BJ (cell line): ENCODE measurements at regions of chr7 and their contacts with region 1.

Region 1: DNA sequence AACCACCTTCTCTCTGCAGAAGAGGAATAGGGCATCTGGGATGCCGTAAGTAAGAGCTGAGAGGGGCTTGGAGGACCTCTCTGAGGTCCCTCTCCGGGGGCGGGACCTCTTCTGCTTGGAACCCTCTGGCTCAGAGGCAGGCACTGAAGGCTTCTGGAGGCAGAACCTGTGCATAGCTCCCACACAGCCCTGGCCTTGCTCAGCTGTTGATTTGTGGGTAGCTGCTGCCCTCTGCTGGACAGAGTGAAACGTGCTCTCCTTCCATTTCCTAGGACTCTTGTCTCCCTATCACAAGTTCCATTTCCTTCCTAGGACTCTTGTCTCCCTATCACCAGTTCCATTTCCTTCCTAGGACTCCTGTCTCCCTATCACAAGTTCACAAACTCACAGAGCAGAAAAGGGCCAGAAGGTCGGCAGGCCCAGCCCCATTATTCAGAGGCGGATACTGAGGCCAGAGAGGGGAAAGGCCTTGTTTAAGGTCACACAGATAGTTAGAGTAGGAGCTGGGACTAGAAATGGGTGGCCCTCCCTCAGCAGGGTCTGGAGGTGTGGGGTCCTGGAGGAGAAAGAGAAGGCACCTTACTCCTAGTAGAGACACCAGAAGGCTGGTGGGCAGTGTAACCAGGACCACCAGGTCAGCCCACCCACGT is 30.3 kb upstream of the GARS1 start:
- DNase-seq: no peak
- H3K4me3 ChIP-seq: no peak overlapping the region
- H3K27me3 ChIP-seq: no peaks in the 10 kb centered on the region
- CTCF ChIP-seq: peak; percentile 83

Region 2: GRCh38 chr7:30164567-30164966 is 399.8 kb before region 1 on chr7:
- CTCF ChIA-PET with region 1: interaction called, 12 read pairs
- POLR2A ChIA-PET with region 1: no interaction called
- DNase-seq: no peak
- H3K4me3 ChIP-seq: no peak overlapping the region
- H3K27me3 ChIP-seq: no peaks in the 10 kb centered on the region
- CTCF ChIP-seq: peak; percentile 61

Region 3: GRCh38 chr7:30276203-30276900 is 288.0 kb before region 1 on chr7:
- CTCF ChIA-PET with region 1: interaction called, 21 read pairs
- POLR2A ChIA-PET with region 1: no interaction called
- DNase-seq: no peak
- H3K4me3 ChIP-seq: no peak overlapping the region
- H3K27me3 ChIP-seq: peaks cover 3% of the 10 kb centered on the region; the same call in 1 of the 2 replicates
- CTCF ChIP-seq: peak; percentile 81

Region 4: DNA sequence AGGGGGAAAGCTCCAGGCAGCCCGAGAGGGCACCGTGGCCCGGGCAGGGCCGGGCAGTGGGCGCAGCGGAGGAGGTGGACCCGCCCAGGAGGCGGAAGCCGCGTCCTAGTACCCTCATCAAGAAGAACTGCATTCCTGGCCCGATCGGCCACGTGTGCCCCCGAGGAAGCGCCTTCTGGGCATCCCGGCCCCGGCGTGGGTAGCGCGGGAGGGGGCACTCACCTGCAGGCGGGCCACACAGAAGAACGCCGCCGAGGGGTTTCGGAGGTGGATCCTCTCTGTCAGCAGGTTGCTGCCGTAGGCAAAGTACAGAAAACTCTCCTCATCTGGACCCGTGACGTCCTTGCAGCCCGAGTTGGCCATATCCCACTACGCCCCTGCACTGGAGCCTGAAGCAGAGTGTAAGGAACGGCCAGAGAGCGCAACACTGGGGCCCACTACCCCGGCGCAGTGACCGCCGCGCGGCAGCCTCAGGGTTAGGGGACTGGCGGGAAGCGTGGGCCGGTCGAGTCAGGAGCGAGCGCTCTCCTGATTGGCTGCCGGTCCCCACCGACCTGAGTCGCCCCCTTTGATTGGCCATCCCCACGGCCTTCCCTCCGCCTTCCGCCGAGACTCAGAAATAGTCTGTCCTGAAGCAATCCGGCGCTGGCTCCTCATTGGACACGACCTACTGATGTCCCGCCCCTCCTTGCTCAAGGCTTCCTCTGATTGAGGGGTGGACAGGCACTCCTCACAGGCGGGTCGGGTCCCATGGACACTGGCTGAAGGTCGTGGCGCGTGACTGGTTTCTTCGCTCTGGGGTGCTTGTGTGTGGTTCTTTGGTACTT is 59.8 kb before region 1 on chr7 and contains the start of gene GGCT:
- CTCF ChIA-PET with region 1: interaction called, 77 read pairs
- POLR2A ChIA-PET with region 1: no interaction called
- DNase-seq: peak; percentile 91
- H3K4me3 ChIP-seq: peak within 1 kb of the TSS; percentile 61
- H3K27me3 ChIP-seq: no peaks in the 10 kb centered on the region
- CTCF ChIP-seq: no peak
- polyA plus RNA-seq, gene GGCT: 16.5 and 18.8 TPM in 2 replicates

Region 5: DNA sequence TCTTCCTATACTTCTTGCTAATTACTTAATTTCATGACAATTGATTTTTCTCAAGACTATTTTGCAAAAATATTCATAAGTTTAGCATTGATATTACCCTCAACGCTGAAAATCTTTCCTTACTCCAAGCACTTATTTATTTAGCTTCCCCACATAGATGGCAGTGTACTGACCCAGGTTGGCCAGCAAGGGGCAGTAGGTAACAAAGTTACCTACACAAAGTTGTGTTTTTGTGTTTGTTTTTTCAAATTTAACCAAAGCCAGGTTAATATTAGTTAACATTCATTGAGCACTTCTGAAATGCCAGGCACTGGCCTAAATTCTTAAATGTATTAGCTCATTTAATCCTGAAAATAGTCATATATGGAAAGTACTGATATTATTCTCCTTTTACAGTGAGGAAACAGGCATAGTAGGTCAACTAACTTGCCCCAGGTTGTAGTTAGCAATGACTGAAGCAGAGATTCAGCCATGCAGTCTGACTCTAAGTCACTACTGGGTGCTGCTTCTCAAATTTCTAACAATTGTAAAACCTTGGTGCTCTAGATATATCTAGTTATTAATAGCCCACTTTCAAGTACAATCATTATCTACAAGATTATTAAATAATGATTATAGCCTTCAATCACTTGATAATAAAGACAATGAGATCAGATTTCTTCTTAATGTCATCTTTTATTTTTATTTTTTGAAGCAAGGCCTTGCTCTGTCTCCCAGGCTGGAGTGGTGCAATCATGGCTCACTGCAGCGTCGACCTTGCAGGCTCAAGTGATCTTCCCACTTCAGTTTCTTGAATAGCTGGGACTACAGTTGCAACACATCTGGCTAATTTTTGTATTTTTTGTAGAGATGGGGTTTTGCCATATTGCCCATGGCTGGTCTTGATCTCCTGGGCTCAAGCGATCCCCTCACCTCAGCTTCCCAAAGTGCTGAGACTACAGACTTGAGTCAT is 54.0 kb before region 1 on chr7:
- CTCF ChIA-PET with region 1: interaction called, 77 read pairs
- POLR2A ChIA-PET with region 1: no interaction called
- DNase-seq: no peak
- H3K4me3 ChIP-seq: no peak overlapping the region
- H3K27me3 ChIP-seq: no peaks in the 10 kb centered on the region
- CTCF ChIP-seq: peak; percentile 84

Region 6: GRCh38 chr7:30548762-30549344 is 15.5 kb before region 1 on chr7:
- CTCF ChIA-PET with region 1: interaction called, 178 read pairs
- POLR2A ChIA-PET with region 1: no interaction called
- DNase-seq: no peak
- H3K4me3 ChIP-seq: no peak overlapping the region
- H3K27me3 ChIP-seq: no peaks in the 10 kb centered on the region
- CTCF ChIP-seq: peak; percentile 87

Region 7: DNA sequence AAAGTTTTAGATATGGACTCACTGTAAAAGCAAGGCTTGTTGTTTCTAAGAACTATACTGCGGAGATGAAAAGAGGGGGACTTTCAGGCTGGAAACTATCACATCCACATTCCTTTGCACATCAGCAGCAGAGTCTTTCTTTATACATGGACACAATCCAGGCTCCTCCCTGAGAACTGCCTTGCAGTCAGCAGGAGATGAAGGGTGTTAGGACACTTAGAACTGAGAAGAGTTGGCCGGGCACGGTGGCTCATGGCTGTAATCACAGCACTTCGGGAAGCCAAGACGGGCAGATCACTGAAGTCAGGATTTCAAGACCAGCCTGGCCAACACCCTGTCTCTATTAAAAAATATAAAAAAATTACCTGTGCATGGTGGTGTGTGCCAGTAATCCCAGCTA is 20.6 kb after region 1 on chr7:
- CTCF ChIA-PET with region 1: interaction called, 13 read pairs
- POLR2A ChIA-PET with region 1: no interaction called
- DNase-seq: no peak
- H3K4me3 ChIP-seq: no peak overlapping the region
- H3K27me3 ChIP-seq: no peaks in the 10 kb centered on the region
- CTCF ChIP-seq: no peak

Region 8: DNA sequence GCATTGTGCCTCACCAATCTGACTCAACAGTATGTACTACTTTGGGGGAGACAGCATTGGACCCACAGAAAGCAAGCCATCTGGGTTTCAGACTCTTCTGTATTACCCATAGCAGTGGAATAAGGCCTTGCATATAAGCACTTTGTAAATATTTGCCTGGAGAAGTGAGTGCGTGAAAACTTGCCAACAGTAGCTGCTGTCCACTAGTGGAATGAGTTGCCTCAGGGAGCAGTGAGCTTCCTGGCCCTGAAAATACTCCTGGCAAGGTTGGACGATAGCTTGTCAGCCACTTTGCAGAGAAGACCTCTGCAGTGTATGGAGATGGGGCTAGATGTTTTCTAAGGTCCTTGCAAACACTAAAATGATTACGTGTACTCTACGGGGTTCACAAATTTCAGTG is 52.0 kb after region 1 on chr7:
- CTCF ChIA-PET with region 1: no interaction called
- POLR2A ChIA-PET with region 1: no interaction called
- DNase-seq: no peak
- H3K4me3 ChIP-seq: no peak overlapping the region
- H3K27me3 ChIP-seq: no peaks in the 10 kb centered on the region
- CTCF ChIP-seq: no peak